Endothelial cell of umbilical vein (primary cell): ENCODE measurements at regions of chr12 and their contacts with region 1.

Region 1: DNA sequence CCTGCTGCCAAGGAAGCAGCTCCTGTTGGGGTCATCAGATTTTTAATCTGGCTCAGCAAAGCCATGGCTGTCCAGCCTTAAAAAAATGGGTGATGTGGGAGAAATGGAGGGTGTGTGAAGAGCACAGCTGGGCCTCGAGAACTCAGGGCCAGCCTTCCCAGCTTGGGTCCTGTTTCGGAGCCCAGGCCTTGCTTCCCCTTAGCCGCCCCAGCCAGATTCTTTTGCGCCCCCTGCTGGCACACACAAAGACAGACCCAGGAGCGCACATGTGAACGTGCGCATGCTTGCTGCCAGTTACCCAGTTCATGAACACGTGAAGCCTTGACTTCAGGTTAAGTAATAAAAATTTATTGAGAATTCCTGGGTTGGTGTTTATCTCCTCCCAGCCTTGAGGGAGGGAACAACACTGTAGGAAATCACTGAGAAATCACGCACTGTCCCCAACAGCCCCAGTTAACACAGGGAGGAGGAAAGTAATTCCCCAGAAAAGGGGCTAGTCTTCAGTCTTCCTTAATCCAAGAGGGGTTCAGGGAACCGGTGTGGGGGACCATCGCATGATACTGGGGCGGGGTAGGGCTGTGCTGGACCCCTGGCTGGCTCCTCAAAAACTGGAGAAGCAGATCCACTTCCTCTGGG is 5.3 kb downstream of the PHB2 start:
- DNase-seq: peak; percentile 80
- H3K4me3 ChIP-seq: no peak overlapping the region
- H3K27ac ChIP-seq: no peak overlapping the region
- H3K4me1 ChIP-seq: peaks cover 23% of the 10 kb centered on the region
- H3K27me3 ChIP-seq: no peaks in the 10 kb centered on the region
- CTCF ChIP-seq: peak; percentile 89 to 92
- POLR2A ChIP-seq: no peak

Region 2: DNA sequence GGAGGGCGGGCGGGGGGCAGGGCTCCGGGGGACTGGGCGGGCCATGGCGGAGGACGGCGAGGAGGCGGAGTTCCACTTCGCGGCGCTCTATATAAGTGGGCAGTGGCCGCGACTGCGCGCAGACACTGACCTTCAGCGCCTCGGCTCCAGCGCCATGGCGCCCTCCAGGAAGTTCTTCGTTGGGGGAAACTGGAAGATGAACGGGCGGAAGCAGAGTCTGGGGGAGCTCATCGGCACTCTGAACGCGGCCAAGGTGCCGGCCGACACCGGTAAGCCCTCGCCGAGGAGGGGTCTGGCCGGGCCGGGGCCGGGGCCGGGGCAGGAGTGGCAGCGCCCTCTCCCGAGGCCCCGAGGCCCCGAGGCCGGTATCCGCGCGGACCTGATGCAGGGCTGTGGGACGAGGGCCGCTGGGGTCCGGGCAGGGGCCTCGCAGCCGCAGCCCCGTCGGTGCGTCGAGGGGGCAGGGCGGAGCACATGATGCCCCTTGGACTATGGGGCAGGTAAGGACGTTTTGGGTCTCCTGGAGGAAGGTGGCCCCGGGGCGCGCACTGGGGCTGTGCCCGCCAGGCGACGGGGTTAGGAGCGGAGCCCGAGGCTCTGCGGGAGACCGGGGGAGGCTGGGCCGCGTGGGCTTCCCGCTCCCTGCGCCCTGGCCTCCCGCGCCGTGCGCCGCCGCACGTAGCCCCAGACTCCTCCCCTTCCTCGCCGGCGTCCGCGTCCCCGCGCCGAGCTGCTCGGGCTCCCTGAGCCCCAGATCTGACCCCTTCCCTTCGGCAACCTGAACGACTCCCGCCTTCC is 97.5 kb before region 1 on chr12 and contains the start of gene TPI1:
- CTCF ChIA-PET with region 1: interaction called, 35 read pairs
- POLR2A ChIA-PET with region 1: interaction called, 3 read pairs
- dilution Hi-C with region 1: no loop called
- intact Hi-C with region 1: loop called (anchors 1 kb)
- DNase-seq: peak; percentile 78
- H3K4me3 ChIP-seq: peak within 1 kb of the TSS; percentile 60 to 95 (median 75)
- H3K27ac ChIP-seq: peak within 1 kb of the TSS; percentile 43
- H3K4me1 ChIP-seq: peaks cover 32% of the 10 kb centered on the region
- H3K27me3 ChIP-seq: no peaks in the 10 kb centered on the region
- CTCF ChIP-seq: no peak
- POLR2A ChIP-seq: peak; percentile 98
- total RNA-seq, gene TPI1: 643 and 676 TPM in 2 replicates

Region 3: GRCh38 chr12:6937481-6938297 is 27.5 kb before region 1 on chr12:
- CTCF ChIA-PET with region 1: interaction called, 10 read pairs
- POLR2A ChIA-PET with region 1: no interaction called
- dilution Hi-C with region 1: no loop called
- intact Hi-C with region 1: loop called (anchors 1 kb)
- DNase-seq: peak; percentile 96
- H3K4me3 ChIP-seq: peak overlapping the region in 2 of 3 experiments; percentile 15 to 51
- H3K27ac ChIP-seq: peak overlapping the region; percentile 41
- H3K4me1 ChIP-seq: peaks cover 22% of the 10 kb centered on the region
- H3K27me3 ChIP-seq: no peaks in the 10 kb centered on the region
- CTCF ChIP-seq: peak; percentile 90 to 98
- POLR2A ChIP-seq: peak; percentile 94

Region 4: GRCh38 chr12:6953442-6954315 is 11.5 kb before region 1 on chr12:
- CTCF ChIA-PET with region 1: interaction called, 10 read pairs
- POLR2A ChIA-PET with region 1: no interaction called
- dilution Hi-C with region 1: no loop called
- intact Hi-C with region 1: no loop called
- DNase-seq: peak; percentile 46
- H3K4me3 ChIP-seq: no peak overlapping the region
- H3K27ac ChIP-seq: no peak overlapping the region
- H3K4me1 ChIP-seq: peaks cover 17% of the 10 kb centered on the region
- H3K27me3 ChIP-seq: no peaks in the 10 kb centered on the region
- CTCF ChIP-seq: no peak
- POLR2A ChIP-seq: no peak

Region 5: DNA sequence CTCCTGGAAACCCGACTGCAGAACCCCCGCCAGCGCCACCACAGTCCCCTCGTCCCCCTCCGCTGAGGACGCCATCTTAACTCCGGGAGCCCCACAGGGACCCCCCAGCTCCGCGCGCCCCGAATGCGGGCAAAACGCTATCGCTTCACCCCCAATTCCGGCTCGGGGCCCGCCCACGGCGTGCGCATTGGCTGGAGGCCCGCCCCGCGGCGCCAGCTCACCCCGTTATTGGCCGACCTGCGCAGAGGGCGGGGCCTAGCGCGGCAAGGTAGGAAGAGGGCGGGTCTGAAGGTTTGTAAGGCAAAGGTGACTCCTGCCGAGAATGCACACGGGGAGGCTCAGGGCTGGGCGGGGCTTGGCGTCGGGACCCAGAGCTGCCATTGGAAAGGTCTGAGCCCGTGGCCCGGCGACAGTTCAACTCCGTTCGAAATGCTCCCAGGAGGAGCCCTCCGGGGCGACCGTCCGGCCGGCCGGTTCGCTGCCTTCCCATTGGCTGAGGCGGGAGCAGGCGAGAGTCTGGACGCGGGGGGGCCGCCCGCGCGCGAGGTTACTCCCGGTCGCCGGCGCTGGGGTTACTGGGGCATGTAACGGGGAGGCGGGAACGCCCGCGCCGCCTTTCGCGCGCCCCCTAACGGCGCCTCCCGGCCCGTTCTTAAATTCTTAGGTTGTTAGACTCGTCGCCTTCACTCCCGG is 53.4 kb after region 1 on chr12 and contains the start of gene LPCAT3:
- CTCF ChIA-PET with region 1: interaction called, 3 read pairs
- POLR2A ChIA-PET with region 1: no interaction called
- dilution Hi-C with region 1: no loop called
- intact Hi-C with region 1: loop called (anchors 1 kb)
- DNase-seq: peak; percentile 97
- H3K4me3 ChIP-seq: peak within 1 kb of the TSS; percentile 79 to 98 (median 97)
- H3K27ac ChIP-seq: peak within 1 kb of the TSS; percentile 64
- H3K4me1 ChIP-seq: peaks cover 10% of the 10 kb centered on the region
- H3K27me3 ChIP-seq: no peaks in the 10 kb centered on the region
- CTCF ChIP-seq: peak; percentile 88 to 94
- POLR2A ChIP-seq: peak; percentile 49
- total RNA-seq, gene LPCAT3: 29.3 and 29.5 TPM in 2 replicates

Region 6: DNA sequence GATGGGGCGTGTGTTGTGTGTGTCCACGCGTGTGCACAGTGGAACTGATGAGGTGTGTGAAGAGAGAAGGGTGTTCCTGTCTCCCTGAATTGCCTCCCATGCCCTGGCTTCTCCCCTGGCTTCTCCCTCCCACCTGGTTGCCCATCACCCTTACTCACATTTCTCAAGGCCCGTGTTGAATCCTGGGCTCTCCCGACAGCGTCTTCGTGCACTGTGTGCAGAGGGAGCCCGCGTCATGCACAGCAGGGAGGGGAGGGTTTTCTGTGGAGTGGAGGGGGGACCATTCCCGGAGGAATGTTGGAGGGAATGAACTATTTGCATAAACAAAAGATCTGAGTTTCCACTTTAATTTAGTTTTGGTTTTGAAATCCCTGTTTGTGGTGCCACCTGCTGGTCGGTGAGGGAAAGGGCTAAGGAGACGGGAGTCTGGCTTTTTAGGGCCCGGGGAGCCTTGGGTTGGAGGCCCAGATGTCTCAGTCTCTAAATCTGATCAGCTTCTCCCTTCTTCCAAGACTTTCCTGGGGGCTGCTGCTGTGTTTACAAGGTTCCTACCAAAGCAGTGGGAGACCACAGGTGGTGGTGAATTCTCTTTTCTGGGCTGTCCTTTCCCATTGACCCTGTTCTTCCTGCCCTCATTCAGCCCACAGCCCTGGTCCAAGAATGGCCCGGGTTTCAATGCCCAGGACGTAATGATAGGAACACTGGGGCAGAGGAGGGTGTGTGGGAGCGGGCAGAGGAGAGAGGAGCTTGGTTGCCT is 127.3 kb after region 1 on chr12 and contains the start of gene C1R:
- CTCF ChIA-PET with region 1: interaction called, 4 read pairs
- POLR2A ChIA-PET with region 1: no interaction called
- dilution Hi-C with region 1: no loop called
- intact Hi-C with region 1: loop called (anchors 5 kb)
- DNase-seq: peak; percentile 67
- H3K4me3 ChIP-seq: peak within 1 kb of the TSS; percentile 51 to 70 (median 64)
- H3K27ac ChIP-seq: no peak within 1 kb of the TSS
- H3K4me1 ChIP-seq: peaks cover 6% of the 10 kb centered on the region
- H3K27me3 ChIP-seq: peaks cover 0 to 16% of the 10 kb centered on the region in 2 experiments
- CTCF ChIP-seq: peak; percentile 85
- POLR2A ChIP-seq: no peak
- total RNA-seq, gene C1R: 3.1 and 3.6 TPM in 2 replicates

Region 7: GRCh38 chr12:7188562-7189397 is 223.6 kb after region 1 on chr12:
- CTCF ChIA-PET with region 1: no interaction called
- POLR2A ChIA-PET with region 1: interaction called, 4 read pairs
- dilution Hi-C with region 1: no loop called
- intact Hi-C with region 1: loop called (anchors 1 kb)
- DNase-seq: peak; percentile 95
- H3K4me3 ChIP-seq: peak overlapping the region in 2 of 3 experiments; percentile 64 to 69
- H3K27ac ChIP-seq: peak overlapping the region; percentile 98
- H3K4me1 ChIP-seq: peaks cover 22% of the 10 kb centered on the region
- H3K27me3 ChIP-seq: no peaks in the 10 kb centered on the region
- CTCF ChIP-seq: peak; percentile 87 to 88
- POLR2A ChIP-seq: no peak

Region 8: DNA sequence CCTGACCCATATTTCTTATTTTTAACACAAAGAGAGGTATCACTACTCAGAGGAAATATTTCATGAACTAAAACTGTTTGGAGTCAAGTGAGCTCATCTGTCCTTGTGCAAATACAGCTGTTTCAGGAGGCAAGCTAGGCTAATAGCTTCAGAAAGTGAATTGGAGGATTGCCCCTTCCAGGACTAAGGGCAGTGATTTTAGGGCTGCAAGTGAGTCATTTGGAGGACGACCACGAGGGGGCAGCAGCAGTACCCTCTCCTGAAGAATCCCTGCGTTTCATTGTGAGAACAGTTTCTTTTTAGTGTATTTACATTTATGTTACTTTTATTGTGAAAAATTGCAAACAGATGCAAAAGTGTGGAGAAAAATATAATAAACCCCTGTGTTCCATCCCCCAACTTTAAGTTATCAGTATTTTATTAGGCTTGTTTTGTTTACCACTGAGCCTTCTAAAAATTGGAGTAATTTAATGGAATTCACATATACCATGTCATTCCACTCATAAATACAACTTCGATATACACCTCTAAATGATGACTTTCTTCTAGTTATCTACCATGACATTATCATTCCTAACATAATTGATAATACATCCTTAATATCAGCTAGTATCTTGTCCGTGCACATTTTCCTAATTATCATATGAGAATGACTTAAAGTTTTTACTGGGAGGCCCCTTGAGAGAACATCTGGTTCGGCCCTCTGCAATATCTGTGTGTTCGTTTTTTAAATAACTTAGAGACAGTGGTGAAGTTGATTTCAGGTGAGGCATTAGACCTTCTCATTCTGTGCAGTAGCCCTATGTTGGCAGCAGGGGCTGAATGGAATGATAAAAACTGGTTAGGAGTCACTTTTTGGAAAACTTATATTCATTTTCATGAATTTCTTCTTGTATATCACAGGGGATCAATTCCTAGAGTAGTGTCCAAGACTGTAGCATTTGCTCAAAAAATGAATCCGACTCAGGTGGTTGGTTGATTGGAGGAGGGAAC is 1081.1 kb after region 1 on chr12:
- CTCF ChIA-PET with region 1: no interaction called
- POLR2A ChIA-PET with region 1: no interaction called
- dilution Hi-C with region 1: no loop called
- intact Hi-C with region 1: no loop called
- DNase-seq: peak; percentile 81
- H3K4me3 ChIP-seq: no peak overlapping the region
- H3K27ac ChIP-seq: no peak overlapping the region
- H3K4me1 ChIP-seq: no peaks in the 10 kb centered on the region
- H3K27me3 ChIP-seq: no peaks in the 10 kb centered on the region
- CTCF ChIP-seq: peak; percentile 83 to 85
- POLR2A ChIP-seq: no peak